ENCODE measurements at regions of chr17 and their contacts with region 1.

Region 1: DNA sequence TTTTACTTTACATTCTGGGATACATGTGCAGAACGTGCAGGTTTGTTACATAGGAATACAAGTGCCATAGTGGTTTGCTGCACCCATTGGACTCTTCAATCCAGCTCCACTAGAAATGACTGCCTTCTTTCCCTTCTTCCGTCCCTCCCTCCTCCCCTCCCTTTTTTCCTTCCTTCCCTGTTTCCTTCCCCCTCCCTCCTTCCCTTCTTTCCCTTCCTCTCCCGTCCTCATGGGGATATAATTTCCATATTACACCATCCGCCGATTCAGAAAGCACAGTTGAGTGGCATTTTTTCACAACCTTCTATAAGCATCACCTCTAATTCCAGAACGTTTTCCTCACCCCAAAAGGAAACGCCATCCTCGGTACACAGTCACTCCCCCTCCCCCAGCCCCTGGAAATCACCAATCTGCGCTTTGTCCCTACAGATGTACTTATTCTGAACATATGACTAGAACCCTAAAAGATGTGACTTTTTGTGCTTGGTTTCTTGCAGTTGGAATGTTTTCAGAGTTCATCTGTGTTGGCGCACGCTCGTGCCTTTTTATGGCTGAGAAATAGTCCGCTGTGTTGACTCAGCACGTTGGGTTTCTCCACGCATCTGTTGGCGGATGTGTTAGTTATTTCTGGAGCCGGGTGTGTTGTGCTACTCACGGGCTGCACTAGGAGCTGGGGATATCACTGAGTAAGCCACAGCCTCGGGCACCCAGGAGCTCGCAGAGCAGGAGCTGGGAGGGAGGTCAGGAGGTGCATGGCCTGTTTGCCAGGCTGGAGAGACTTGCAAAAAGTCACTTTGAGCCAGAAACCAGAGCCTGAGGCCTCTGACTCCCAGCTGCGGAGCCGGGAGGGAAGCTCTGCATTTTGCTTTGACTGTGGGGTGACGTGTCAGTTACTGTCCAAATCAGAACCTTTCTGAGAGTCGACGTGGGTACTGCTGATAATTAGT is 336.4 kb downstream of the SEC14L1 start:
- DNase-seq: peak; percentile 70
- H3K4me3 ChIP-seq: peak overlapping the region; percentile 13
- H3K27ac ChIP-seq: peak overlapping the region; percentile 91
- H3K4me1 ChIP-seq: peaks cover 81% of the 10 kb centered on the region
- CTCF ChIP-seq: no peak

Region 2: DNA sequence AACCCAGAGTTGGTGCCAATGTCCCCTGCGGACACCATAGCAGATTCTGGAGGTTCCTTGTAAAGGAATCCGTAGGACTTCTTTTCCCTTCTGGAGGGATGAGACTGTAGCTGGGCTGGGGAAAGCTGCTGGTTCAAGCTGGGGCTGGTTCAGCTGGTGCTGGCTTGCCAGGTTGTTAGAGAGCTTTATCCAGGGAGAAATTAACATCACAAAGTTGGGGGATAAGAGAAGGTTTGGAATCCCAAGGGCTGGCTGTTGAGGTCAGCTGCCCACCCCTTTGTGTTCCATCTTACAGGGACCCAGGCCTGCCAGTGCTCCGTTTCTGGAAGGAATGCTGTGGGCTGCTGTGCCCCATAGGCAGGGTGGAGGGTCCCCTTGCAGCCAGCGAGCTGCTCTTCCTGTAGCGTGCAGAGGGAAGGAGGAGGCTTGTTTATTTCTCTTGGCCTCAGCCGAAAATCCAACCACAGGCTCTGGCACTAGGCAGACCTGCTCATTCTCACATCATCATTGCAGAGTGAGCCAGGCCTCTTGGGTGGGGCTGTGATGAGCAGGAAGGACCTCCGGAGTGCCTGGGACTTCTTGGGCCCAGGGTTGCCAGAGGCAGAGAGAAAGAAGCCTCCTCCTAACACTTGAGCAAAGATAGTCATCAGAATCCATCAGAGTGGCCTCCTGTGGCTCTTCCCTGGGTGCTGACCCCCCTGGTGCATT is 85.4 kb before region 1 on chr17:
- CTCF ChIA-PET with region 1: no interaction called
- POLR2A ChIA-PET with region 1: no interaction called
- intact Hi-C with region 1: no loop called
- DNase-seq: no peak
- H3K4me3 ChIP-seq: no peak overlapping the region
- H3K27ac ChIP-seq: no peak overlapping the region
- H3K4me1 ChIP-seq: peaks cover 25% of the 10 kb centered on the region
- CTCF ChIP-seq: no peak

Region 3: DNA sequence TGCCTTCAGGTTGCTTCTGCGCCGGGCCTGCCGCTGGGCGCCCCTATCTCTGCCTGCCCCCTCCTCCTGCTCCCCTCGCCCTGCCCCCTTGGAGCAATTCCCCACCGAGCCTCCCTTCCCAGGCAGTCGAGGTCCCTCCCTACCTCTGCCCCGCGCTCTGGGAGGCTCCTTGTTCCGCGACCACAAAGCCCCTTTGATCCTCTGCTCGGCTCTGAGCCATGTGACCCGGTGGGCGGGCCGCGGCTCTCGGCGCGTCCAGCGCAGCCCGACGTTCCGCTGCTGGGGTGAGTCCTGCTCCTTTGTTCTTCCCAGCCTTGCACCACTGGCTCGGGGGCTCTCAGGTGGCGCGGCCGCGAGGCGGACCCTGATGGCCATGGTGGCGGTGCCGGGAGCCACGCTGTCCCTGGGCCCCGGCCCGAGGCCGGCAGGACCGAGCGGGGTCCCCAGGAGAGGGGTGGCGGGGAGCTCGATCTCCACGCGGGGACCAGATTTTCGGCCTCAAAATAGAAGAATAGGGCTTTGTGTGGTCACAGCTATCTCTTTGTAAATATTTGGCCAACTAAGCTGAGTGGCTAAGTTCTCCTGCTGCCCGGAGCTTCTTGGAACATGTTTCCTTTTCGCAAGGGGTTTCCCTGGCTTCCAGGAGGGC is 25.8 kb before region 1 on chr17:
- CTCF ChIA-PET with region 1: interaction called, 8 read pairs
- POLR2A ChIA-PET with region 1: interaction called, 60 read pairs
- intact Hi-C with region 1: no loop called
- DNase-seq: peak; percentile 84
- H3K4me3 ChIP-seq: peak overlapping the region; percentile 76
- H3K27ac ChIP-seq: peak overlapping the region; percentile 95
- H3K4me1 ChIP-seq: peaks cover 69% of the 10 kb centered on the region
- CTCF ChIP-seq: no peak